ENCODE measurements at regions of chr12 and their contacts with region 1.

Region 1: DNA sequence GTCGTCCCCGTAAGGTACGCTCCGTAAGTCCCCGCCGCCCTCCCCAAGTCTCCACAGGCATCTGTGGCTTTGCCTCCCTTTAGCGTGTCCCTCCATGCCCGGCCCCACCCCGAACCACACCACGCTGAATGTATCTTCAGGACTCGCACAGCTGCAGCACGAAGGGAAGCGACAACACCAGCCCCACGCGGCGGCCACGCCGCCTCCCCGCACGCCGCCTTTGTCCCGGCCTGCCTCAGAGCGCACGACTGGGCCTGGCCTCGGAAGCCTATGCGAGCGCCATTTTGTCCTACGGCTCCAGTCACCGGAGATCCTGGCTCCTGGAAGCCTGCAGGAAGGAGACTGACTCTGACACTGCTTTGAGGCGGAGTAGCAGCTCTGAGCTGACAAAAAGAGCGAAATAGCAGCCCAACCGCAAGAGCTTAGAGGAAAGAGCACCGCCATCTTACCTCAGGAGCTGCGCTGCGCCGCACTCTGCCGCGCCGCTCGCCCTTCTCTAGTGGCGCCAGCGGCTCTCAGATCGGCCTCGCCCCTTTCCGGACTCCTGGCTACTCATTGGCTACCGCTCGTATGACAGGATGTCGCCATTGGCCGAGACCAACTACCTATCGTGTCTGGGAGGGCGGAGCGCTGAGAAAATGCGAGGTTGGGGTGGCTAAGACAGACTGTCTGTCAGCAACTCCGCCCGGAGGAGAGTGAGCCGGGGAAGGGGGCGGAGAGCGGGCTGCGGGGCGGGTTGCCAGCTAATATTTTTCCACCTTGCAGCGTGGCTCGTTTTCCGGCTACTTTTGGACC is at the start of gene KANSL2:
- DNase-seq: peak; percentile 79 to 98 (median 96)
- ATAC-seq: peak; percentile 97
- H3K4me3 ChIP-seq: peak within 1 kb of the TSS; percentile 88
- H3K4me3 Mint-ChIP-seq: peak within 1 kb of the TSS; percentile 93 to 99 (median 97)
- H3K27ac ChIP-seq: peak within 1 kb of the TSS; percentile 90
- H3K27ac Mint-ChIP-seq: peak within 1 kb of the TSS; percentile 97 to 99 (median 98)
- H3K4me1 ChIP-seq: peaks cover 30 to 38% of the 10 kb centered on the region in 2 donors
- H3K4me1 Mint-ChIP-seq: peaks cover 32 to 59% (median 53%) of the 10 kb centered on the region in 7 donors
- H3K27me3 ChIP-seq: no peaks in the 10 kb centered on the region
- H3K27me3 Mint-ChIP-seq: no peaks in the 10 kb centered on the region
- total RNA-seq, gene KANSL2: 37.5 to 117 (median 74.4) TPM

Region 2: DNA sequence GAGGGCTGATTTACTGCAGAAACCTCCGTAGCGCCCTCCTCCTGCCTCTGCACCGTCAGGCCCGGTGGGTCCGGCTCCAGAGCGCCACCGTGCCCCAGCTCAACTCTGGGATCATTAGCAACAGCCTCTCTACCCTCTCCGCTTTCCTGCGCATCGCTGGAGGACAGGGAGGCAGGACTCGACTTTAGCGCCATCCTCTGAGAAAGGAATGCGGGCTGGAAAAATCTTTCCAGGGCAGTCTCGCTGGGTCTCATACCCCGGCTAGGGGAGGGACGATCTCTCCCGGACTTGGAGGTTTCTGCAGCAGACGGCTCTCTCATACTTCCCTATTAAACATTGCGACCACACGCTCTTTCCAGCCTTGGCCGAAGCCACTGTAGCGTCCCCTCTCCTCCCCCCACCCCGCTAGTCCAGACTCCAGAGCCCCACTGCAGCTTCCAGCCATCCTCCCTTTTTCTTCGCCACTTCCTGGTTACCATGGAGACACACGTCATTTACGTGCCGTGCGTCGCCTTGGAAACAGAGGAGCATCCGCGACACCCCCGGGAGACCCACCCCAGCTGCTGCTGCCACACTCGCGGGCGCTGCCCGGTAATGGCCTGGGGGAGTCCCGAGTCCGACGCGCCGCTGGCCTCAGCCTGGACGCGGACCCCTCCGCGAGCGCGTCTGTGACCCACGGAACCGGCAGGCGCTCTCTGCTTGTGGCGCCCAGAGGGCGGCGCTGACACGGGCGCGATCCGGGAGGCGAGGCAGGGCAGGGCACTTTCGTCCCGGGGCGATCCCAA is 498.7 kb before region 1 on chr12 and contains the start of gene CCDC184:
- CTCF ChIA-PET with region 1: no interaction called
- POLR2A ChIA-PET with region 1: no interaction called
- intact Hi-C with region 1: loop called in 1 of 2 experiments (anchors 1 kb)
- DNase-seq: peak; percentile 58 to 85 (median 83)
- ATAC-seq: peak; percentile 84
- H3K4me3 ChIP-seq: peak within 1 kb of the TSS; percentile 80
- H3K4me3 Mint-ChIP-seq: peak within 1 kb of the TSS; percentile 91 to 98 (median 96)
- H3K27ac ChIP-seq: peak within 1 kb of the TSS; percentile 59
- H3K27ac Mint-ChIP-seq: peak within 1 kb of the TSS; percentile 60 to 95 (median 86)
- H3K4me1 ChIP-seq: peaks cover 6 to 11% of the 10 kb centered on the region in 2 donors
- H3K4me1 Mint-ChIP-seq: peaks cover 5 to 28% (median 8%) of the 10 kb centered on the region in 7 donors
- H3K27me3 ChIP-seq: peaks cover 0 to 4% of the 10 kb centered on the region in 2 donors
- H3K27me3 Mint-ChIP-seq: peaks cover 21 to 81% (median 38%) of the 10 kb centered on the region in 5 donors
- total RNA-seq, gene CCDC184: 0.22 to 3.8 (median 1.8) TPM in 4 of 5 experiments, not detected in the other

Region 3: DNA sequence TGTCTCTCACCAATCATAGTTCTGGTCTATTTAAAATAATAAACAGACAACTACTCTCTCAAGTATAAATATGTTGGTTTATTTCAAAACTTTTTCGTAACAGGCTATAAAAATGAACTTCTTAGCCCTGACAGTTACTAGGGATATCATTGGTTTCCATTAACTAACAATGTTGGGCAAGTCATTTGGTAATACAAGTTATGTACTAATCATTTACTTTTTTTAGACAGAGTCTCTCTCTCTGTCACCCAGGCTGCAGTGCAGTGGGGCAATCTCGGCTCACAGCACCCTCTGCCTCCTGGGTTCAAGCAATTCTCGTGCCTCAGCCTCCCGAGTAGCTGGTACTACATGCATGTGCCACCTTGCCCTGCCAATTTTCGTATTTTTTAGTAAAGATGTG is 14.7 kb after region 1 on chr12:
- CTCF ChIA-PET with region 1: no interaction called
- POLR2A ChIA-PET with region 1: interaction called, 17 read pairs
- intact Hi-C with region 1: no loop called
- DNase-seq: no peak
- ATAC-seq: no peak
- H3K4me3 ChIP-seq: no peak overlapping the region
- H3K4me3 Mint-ChIP-seq: no peak overlapping the region
- H3K27ac ChIP-seq: no peak overlapping the region
- H3K27ac Mint-ChIP-seq: peak overlapping the region in 1 of 9 donors; percentile 14
- H3K4me1 ChIP-seq: no peaks in the 10 kb centered on the region
- H3K4me1 Mint-ChIP-seq: peaks cover 0 to 30% (median 15%) of the 10 kb centered on the region in 7 donors
- H3K27me3 ChIP-seq: no peaks in the 10 kb centered on the region
- H3K27me3 Mint-ChIP-seq: no peaks in the 10 kb centered on the region

Region 4: GRCh38 chr12:48795480-48796455 is 113.8 kb after region 1 on chr12:
- CTCF ChIA-PET with region 1: no interaction called
- POLR2A ChIA-PET with region 1: no interaction called
- intact Hi-C with region 1: loop called in 1 of 2 experiments (anchors 5 kb)
- DNase-seq: peak in 8 of 9 donors; percentile 14 to 62 (median 48)
- ATAC-seq: peak; percentile 89
- H3K4me3 ChIP-seq: no peak overlapping the region
- H3K4me3 Mint-ChIP-seq: no peak overlapping the region
- H3K27ac ChIP-seq: no peak overlapping the region
- H3K27ac Mint-ChIP-seq: peak overlapping the region in 1 of 9 donors; percentile 52
- H3K4me1 ChIP-seq: no peaks in the 10 kb centered on the region
- H3K4me1 Mint-ChIP-seq: peaks cover 0 to 10% (median 4%) of the 10 kb centered on the region in 7 donors
- H3K27me3 ChIP-seq: no peaks in the 10 kb centered on the region
- H3K27me3 Mint-ChIP-seq: peaks cover 0 to 16% (median 3%) of the 10 kb centered on the region in 5 donors